Adrenal gland (tissue), 19 donors: ENCODE measurements at regions of chr5 and their contacts with region 1.

Region 1: GRCh38 chr5:155759252-155759651 is 567.7 kb upstream of the SGCD start:
- DNase-seq: no peak
- H3K4me3 ChIP-seq: no peak overlapping the region
- H3K27ac ChIP-seq: no peak overlapping the region
- H3K4me1 ChIP-seq: no peaks in the 10 kb centered on the region
- H3K27me3 ChIP-seq: no peaks in the 10 kb centered on the region
- CTCF ChIP-seq: no peak
- POLR2A ChIP-seq: no peak

Region 2: DNA sequence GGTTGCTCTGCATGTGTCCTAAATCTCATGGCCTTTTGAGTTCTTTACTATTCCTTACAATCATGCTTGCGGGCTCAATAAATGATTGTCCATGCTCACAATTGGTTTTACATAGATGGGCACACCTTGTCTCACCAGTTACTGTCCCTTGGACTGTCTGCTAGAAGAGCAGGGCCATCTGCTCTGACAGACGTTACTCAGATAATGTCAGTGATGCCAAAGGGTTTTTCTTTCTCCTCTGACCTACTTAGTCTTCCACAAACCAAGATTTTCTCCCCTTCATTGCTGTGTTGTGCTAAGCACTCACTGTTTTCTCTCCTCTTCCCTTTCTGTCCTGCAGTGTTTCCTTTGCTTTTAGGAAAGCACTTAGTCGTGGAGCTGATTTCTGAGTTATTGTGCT is 183.4 kb before region 1 on chr5:
- intact Hi-C with region 1: loop called in 1 of 2 experiments (anchors 5 kb)
- DNase-seq: no peak
- H3K4me3 ChIP-seq: no peak overlapping the region
- H3K27ac ChIP-seq: no peak overlapping the region
- H3K4me1 ChIP-seq: no peaks in the 10 kb centered on the region
- H3K27me3 ChIP-seq: no peaks in the 10 kb centered on the region
- CTCF ChIP-seq: no peak
- POLR2A ChIP-seq: no peak

Region 3: GRCh38 chr5:156522651-156523529 is 763.6 kb after region 1 on chr5:
- intact Hi-C with region 1: no loop called
- DNase-seq: no peak
- H3K4me3 ChIP-seq: no peak overlapping the region
- H3K27ac ChIP-seq: no peak overlapping the region
- H3K4me1 ChIP-seq: no peaks in the 10 kb centered on the region
- H3K27me3 ChIP-seq: no peaks in the 10 kb centered on the region
- CTCF ChIP-seq: no peak
- POLR2A ChIP-seq: no peak